SK-N-SH (cell line): ENCODE measurements at regions of chr4 and their contacts with region 1.

Region 1: DNA sequence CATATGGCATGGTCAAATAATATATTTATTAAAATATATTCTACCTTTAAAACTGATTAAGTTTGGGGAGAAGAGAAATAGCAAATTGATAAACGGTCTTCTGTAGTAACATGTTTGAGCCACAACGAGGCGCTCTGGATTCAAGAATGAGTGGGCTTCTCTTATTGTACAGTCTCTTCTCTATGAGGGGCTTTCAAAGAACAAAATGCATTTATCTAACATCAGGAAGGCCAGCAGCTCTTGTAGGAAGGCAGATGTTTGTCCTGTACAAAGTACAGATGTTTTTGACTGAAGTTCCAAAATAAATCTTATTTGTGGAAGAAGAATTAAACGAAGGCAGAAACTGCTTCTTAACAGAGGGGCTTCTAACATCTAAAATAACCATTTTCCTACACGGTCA is 153.6 kb downstream of the RASL11B start:
- DNase-seq: peak; percentile 36
- H3K4me3 ChIP-seq: no peak overlapping the region; a peak in 1 of 4 replicates
- H3K27ac ChIP-seq: peak overlapping the region in 1 of 2 experiments; percentile 100; a peak in 2 of 4 replicates
- H3K4me1 ChIP-seq: peaks cover 51 to 56% of the 10 kb centered on the region in 2 experiments
- H3K27me3 ChIP-seq: no peaks in the 10 kb centered on the region
- CTCF ChIP-seq: peak; percentile 87
- EP300 ChIP-seq: peak in 1 of 2 experiments; percentile 90; a peak in 2 of 4 replicates
- RAD21 ChIP-seq: peak; percentile 99

Region 2: GRCh38 chr4:52996261-52996892 is 19.3 kb before region 1 on chr4:
- CTCF ChIA-PET with region 1: interaction called, 20 read pairs
- POLR2A ChIA-PET with region 1: interaction called, 7 read pairs
- DNase-seq: peak; percentile 71
- H3K4me3 ChIP-seq: peak overlapping the region in 1 of 2 experiments; percentile 9; a peak in 1 of 4 replicates
- H3K27ac ChIP-seq: peak overlapping the region; percentile 43 to 100
- H3K4me1 ChIP-seq: peaks cover 0 to 49% of the 10 kb centered on the region in 2 experiments; a peak in 2 of 4 replicates
- H3K27me3 ChIP-seq: no peaks in the 10 kb centered on the region
- CTCF ChIP-seq: no peak
- EP300 ChIP-seq: peak; percentile 70 to 92
- RAD21 ChIP-seq: peak; percentile 5; the same call in 1 of the 2 replicates

Region 3: DNA sequence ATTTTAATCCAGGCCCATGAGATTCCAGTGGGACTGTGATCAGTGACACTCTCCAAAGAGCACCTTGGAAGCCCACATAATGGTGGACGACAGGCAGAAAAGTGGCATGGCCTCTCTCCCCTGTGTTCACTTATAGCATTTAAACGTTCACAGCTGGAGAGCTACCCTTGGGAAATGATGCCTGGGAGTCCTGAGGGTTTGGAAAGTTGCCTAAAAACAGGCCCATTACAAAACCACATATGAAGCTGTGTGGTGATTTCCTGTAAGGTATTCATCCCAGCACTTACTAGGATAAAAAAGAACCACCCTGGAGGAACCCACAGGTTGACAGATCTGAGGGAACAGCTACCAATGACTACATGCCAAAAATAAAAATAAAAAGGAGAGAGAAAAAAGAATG is 39.6 kb after region 1 on chr4:
- CTCF ChIA-PET with region 1: interaction called, 108 read pairs
- POLR2A ChIA-PET with region 1: interaction called, 9 read pairs
- DNase-seq: peak; percentile 14
- H3K4me3 ChIP-seq: no peak overlapping the region
- H3K27ac ChIP-seq: peak overlapping the region in 1 of 2 experiments; percentile 93; a peak in 2 of 4 replicates
- H3K4me1 ChIP-seq: peaks cover 7 to 40% of the 10 kb centered on the region in 2 experiments; a peak in 3 of 4 replicates
- H3K27me3 ChIP-seq: no peaks in the 10 kb centered on the region
- CTCF ChIP-seq: no peak
- EP300 ChIP-seq: peak in 1 of 2 experiments; percentile 25; a peak in 1 of 4 replicates
- RAD21 ChIP-seq: no peak; the same call in 1 of the 2 replicates

Region 4: DNA sequence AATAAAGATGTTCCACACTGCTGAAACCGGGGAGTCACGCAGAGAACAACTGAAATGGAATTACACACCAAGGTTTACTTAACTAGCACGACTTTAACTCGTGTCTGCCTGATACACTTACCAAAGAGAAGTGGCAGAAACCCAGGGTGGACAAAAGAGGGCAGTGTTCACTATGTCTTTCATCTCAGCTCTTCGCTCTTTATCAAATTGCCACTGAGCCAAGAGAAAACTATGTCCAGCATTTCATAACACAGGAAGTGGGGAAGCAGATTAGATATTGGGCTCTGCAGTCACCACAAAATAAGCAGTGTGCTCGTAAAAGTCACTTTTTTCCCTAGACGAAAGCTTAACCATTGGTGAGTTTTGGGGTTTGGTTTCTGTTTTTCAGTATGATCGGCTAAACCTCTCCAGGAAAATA is 893.0 kb after region 1 on chr4:
- CTCF ChIA-PET with region 1: interaction called, 29 read pairs
- POLR2A ChIA-PET with region 1: no interaction called
- DNase-seq: peak; percentile 58
- H3K4me3 ChIP-seq: peak overlapping the region; percentile 14 to 21; a peak in 3 of 4 replicates
- H3K27ac ChIP-seq: peak overlapping the region; percentile 59 to 86
- H3K4me1 ChIP-seq: peaks cover 7 to 22% of the 10 kb centered on the region in 2 experiments; a peak in 3 of 4 replicates
- H3K27me3 ChIP-seq: no peaks in the 10 kb centered on the region
- CTCF ChIP-seq: peak; percentile 85
- EP300 ChIP-seq: peak; percentile 19 to 61; a peak in 3 of 4 replicates
- RAD21 ChIP-seq: peak; percentile 97

Region 5: GRCh38 chr4:54228056-54228527 is 1212.4 kb after region 1 on chr4:
- CTCF ChIA-PET with region 1: interaction called, 128 read pairs
- POLR2A ChIA-PET with region 1: interaction called, 7 read pairs
- DNase-seq: peak; percentile 87
- H3K4me3 ChIP-seq: peak overlapping the region; percentile 64 to 85
- H3K27ac ChIP-seq: peak overlapping the region; percentile 79 to 90; a peak in 3 of 4 replicates
- H3K4me1 ChIP-seq: peaks cover 0 to 20% of the 10 kb centered on the region in 2 experiments; a peak in 2 of 4 replicates
- H3K27me3 ChIP-seq: no peaks in the 10 kb centered on the region
- CTCF ChIP-seq: peak; percentile 88
- EP300 ChIP-seq: no peak
- RAD21 ChIP-seq: peak; percentile 91